Transverse colon (tissue), 4 donors: ENCODE measurements at regions of chr10 and their contacts with region 1.

Region 1: DNA sequence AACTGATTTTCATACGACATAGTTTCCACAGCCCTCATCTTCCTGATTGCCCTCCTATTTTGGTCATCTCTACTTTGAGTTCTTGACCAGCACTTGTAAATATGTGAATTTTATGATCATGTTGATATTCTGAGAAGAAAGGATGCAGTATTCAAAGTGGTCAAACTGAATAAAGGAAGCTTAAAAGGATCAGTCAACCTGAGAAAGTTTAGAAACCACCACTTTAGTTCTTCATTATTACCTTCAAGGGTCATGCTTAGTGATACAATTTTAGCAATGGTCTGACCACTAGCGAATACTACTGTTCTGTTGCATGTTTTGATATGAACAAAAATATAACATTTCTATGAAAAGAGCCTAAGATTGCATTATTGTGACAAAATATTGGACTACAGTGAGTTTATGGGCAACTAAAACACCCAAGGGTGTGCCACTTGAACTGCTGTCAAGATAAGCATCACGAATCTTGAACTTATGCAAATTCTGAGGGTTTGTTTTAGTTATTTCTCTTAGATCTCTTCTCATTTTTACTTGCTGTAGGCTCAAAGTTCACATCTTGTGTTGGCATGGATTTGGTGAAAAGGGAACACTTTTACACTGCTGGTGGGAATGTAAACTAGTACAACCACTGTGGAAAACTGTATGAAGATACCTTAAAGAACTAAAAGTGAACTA is 247.7 kb downstream of the IPMK start:
- DNase-seq: no peak
- H3K4me3 ChIP-seq: no peak overlapping the region
- H3K27ac ChIP-seq: no peak overlapping the region
- H3K4me1 ChIP-seq: peaks cover 0 to 5% (median 1%) of the 10 kb centered on the region in 4 donors
- H3K27me3 ChIP-seq: no peaks in the 10 kb centered on the region
- CTCF ChIP-seq: no peak
- EP300 ChIP-seq: no peak
- POLR2A ChIP-seq: no peak

Region 2: GRCh38 chr10:58082248-58082647 is 62.2 kb after region 1 on chr10:
- in situ Hi-C with region 1: no loop called
- intact Hi-C with region 1: loop called (anchors 2 kb)
- DNase-seq: no peak
- H3K4me3 ChIP-seq: no peak overlapping the region
- H3K27ac ChIP-seq: peak overlapping the region in 1 of 4 donors; percentile 8
- H3K4me1 ChIP-seq: peaks cover 0 to 2% (median 0%) of the 10 kb centered on the region in 4 donors
- H3K27me3 ChIP-seq: no peaks in the 10 kb centered on the region
- CTCF ChIP-seq: no peak
- EP300 ChIP-seq: no peak
- POLR2A ChIP-seq: no peak

Region 3: DNA sequence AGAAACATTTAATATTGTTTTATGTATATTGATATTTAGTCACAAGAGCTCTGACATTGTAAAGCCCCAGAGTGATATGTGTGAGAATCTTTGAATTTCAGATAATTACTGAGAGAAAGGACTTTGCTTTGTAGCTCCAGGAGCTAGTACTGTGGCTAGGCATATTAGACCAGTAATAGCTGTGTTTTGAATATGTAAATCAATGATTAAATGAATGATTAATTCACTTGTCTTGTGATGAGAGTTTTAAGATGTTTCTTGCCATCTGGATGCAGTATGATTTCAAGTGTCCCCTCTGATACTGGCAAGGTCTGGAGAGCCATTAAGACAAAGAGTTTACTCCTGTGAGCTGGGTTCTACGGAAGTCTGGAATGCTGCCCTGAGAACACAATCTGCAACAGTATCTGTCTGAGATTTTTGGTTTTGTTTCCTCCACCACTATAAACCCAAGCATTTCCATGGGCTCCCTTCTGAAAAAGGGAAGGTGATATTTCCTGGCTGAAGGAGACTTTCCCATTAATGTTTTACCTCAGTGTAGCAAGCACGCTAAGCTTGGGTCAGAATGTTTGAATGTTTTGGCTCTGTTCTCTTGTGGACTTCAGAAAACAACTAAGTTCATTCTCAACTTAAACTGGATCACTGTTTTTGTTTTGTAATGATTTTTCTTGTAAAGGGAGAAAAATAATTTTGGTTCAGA is 431.3 kb after region 1 on chr10:
- in situ Hi-C with region 1: no loop called
- intact Hi-C with region 1: no loop called
- DNase-seq: no peak
- H3K4me3 ChIP-seq: no peak overlapping the region
- H3K27ac ChIP-seq: no peak overlapping the region
- H3K4me1 ChIP-seq: peaks cover 0 to 3% (median 0%) of the 10 kb centered on the region in 4 donors
- H3K27me3 ChIP-seq: no peaks in the 10 kb centered on the region
- CTCF ChIP-seq: no peak
- EP300 ChIP-seq: no peak
- POLR2A ChIP-seq: no peak